BJ (cell line): ENCODE measurements at regions of chr15 and their contacts with region 1.

Region 1: GRCh38 chr15:90362936-90363212 is 10.8 kb downstream of the ZNF774 start:
- DNase-seq: peak; percentile 52
- H3K4me3 ChIP-seq: no peak overlapping the region
- H3K27me3 ChIP-seq: no peaks in the 10 kb centered on the region
- CTCF ChIP-seq: no peak

Region 2: DNA sequence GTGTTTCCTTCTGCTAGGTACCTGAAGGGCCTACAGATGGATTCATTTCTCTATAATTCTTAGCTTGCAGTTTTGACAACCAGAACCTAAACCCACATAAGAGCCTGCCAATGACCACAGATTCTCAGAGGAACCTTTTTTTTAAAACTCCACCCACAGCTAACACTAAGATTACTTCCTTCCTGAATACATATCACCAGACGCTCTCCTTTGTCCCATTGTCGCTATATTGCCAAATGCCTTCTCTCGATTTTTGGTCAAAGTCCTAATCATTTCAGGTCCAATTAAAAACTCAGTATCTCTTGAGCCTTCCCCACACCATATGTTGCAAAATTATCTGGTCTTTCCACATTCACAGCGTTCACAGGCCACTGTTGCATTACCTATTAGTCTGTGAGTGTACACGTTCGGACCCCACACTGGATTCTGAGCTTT is 349.4 kb before region 1 on chr15:
- CTCF ChIA-PET with region 1: no interaction called
- POLR2A ChIA-PET with region 1: no interaction called
- DNase-seq: no peak
- H3K4me3 ChIP-seq: no peak overlapping the region
- H3K27me3 ChIP-seq: no peaks in the 10 kb centered on the region
- CTCF ChIP-seq: no peak

Region 3: DNA sequence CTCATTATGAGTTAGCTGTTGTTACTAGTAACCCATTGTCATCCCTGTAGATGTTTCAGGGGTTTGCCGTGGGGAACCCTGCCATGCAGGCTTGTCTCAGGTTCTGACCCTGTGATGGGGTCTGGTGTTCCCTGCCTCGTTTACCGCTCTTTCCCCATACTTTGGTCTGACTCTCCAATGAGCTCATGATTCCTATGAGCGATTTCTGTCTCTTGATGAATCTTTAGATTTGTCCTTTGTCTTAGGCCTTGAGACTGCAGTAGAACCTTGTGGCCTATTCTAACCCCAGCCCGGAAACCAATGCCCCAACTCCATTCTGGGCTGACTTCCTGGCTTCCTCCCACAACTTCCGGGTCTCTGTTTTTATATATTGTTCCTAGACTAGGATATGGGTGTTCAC is 13.9 kb after region 1 on chr15:
- CTCF ChIA-PET with region 1: interaction called, 11 read pairs
- POLR2A ChIA-PET with region 1: no interaction called
- DNase-seq: no peak
- H3K4me3 ChIP-seq: no peak overlapping the region
- H3K27me3 ChIP-seq: no peaks in the 10 kb centered on the region
- CTCF ChIP-seq: no peak

Region 4: DNA sequence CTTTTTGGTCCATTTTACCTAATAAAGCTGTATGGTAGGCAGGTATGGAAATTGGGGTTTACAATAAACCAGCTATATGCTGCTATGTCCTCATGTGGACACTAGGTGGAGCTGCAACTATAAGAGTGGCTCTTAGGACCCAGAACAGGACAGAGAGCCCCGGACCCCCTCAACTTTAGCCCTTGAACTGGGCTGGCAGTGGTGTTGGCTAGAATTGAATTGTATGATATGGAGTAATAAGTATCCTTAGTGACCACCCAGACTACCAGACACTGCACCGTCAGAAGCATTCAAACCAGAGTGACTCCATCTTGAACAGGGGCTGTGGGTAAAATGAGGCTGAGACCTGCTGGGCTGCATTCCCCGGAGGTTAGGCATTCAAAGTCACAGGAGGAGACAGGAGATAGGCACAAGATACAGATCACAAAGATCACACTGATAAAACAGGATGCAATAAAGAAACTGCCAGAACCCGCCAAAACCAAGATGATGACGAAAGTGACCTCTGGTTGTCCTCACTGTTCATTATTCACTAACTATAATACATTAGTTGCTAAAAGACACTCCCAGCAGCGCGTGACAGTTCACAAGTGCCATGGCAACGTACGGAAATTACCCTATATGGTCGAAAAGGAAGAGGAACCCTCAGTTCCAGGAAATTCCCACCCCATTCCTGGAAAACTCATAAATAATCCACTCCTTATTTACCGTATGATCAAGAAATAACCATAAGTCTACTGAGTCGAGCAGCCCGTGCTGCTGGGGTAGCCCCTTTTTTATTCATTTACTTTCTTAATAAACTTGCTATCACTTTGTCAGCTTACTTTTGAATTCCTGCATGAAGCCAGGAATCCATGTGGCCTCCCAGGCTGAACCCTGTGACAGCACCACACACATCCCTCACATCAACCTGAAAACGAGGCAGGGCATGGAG is 285.5 kb after region 1 on chr15:
- CTCF ChIA-PET with region 1: no interaction called
- POLR2A ChIA-PET with region 1: no interaction called
- DNase-seq: no peak
- H3K4me3 ChIP-seq: no peak overlapping the region
- H3K27me3 ChIP-seq: no peaks in the 10 kb centered on the region
- CTCF ChIP-seq: peak; percentile 88